K562 (cell line): ENCODE measurements at regions of chr1 and their contacts with region 1.

Region 1: DNA sequence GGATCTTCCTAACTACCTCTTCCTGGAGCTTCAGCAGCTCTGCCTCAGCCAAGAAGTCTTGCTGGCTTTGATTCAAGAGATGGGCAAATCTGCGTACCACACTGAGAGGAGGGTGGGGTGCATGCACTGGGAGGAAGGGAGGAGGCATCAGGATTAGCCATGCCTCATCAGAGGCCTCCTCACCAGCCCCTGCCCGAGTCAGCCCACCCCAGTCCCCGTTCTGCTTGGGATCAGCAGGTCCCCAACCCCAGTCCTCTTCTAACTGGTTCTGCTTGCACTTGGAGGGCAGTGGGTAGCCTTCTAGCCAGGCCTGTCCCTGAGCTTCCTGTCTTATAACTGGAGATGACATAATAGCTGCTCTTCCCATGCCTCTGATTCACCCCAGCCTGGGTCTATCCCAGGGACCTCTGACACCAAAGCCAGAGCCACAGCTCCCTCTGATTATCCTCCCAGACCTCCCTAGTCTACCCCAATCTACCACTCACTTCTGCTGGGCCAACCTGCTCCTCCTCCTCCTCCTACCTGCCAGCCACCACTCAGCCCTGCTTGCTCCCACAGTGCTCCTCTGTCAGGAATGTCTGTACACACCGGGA is 31.5 kb downstream of the IQGAP3 start:
- DNase-seq: no peak
- ATAC-seq: no peak
- H3K4me3 ChIP-seq: no peak overlapping the region
- H3K27ac ChIP-seq: no peak overlapping the region
- H3K4me1 ChIP-seq: no peaks in the 10 kb centered on the region
- H3K27me3 ChIP-seq: no peaks in the 10 kb centered on the region
- CTCF ChIP-seq: no peak
- EP300 ChIP-seq: no peak
- POLR2A ChIP-seq: no peak
- RAD21 ChIP-seq: no peak

Region 2: GRCh38 chr1:156480411-156481192 is 60.3 kb before region 1 on chr1:
- CTCF ChIA-PET with region 1: no interaction called
- POLR2A ChIA-PET with region 1: no interaction called
- in situ Hi-C with region 1: no loop called
- intact Hi-C with region 1: loop called (anchors 10 kb)
- DNase-seq: peak; percentile 72 to 78 (median 75)
- ATAC-seq: peak; percentile 94
- H3K4me3 ChIP-seq: no peak overlapping the region
- H3K27ac ChIP-seq: no peak overlapping the region
- H3K4me1 ChIP-seq: peaks cover 0 to 15% of the 10 kb centered on the region in 2 experiments; a peak in 2 of 5 replicates
- H3K27me3 ChIP-seq: no peaks in the 10 kb centered on the region
- CTCF ChIP-seq: peak; percentile 68 to 79 (median 73)
- EP300 ChIP-seq: no peak
- POLR2A ChIP-seq: no peak
- RAD21 ChIP-seq: peak; percentile 40 to 76

Region 3: DNA sequence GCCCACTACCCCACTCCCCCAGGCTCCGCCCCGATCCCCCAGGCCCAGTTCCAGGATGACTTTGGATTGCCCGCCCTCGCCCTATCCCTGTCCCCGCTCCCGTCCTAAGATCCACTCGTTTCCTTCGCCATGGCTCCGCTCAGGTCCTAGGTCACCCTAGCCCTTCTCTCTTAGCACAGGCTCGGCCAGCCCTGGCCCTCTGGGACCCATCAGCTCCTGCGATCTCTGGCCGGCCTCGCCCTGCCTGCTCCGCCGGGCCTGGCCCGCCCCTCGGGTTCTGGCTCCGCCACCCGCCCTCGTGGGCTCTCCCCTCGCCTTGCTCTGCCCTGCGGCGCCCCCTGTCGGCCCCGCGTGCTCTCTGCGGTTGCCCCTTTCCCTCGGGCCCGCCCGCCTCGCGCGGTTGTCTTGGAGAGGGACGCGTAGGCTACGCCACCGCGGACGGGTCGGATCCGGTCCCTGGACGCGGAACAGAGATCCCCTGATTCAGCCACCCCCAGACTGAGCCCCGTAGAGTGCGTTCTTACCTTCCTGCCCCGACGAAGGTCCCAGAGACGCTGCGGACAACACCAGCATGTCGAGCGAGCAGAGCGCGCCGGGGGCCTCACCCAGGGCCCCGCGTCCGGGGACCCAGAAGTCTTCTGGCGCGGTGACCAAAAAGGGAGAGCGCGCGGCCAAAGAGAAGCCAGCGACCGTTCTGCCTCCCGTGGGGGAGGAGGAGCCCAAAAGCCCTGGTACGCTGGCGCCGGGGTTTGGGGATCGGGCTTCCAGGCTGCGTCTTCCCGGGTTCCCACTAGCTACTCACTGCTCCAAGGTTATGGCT is 379.6 kb after region 1 on chr1 and contains the start of gene LRRC71:
- CTCF ChIA-PET with region 1: no interaction called
- POLR2A ChIA-PET with region 1: no interaction called
- in situ Hi-C with region 1: no loop called
- intact Hi-C with region 1: no loop called
- DNase-seq: peak; percentile 94 to 96 (median 95)
- ATAC-seq: peak; percentile 97
- H3K4me3 ChIP-seq: peak within 1 kb of the TSS; percentile 15; the same call in 1 of the 2 replicates
- H3K27ac ChIP-seq: no peak within 1 kb of the TSS
- H3K4me1 ChIP-seq: peaks cover 17 to 34% of the 10 kb centered on the region in 2 experiments
- H3K27me3 ChIP-seq: peaks cover 8 to 17% of the 10 kb centered on the region in 2 experiments; a peak in 3 of 5 replicates
- CTCF ChIP-seq: peak; percentile 97 to 98 (median 97)
- EP300 ChIP-seq: no peak
- POLR2A ChIP-seq: no peak
- RAD21 ChIP-seq: peak; percentile 99
- polyA plus RNA-seq, gene LRRC71: 0.23 to 0.38 TPM